Calu3 (cell line): ENCODE measurements at regions of chr2 and their contacts with region 1.

Region 1: DNA sequence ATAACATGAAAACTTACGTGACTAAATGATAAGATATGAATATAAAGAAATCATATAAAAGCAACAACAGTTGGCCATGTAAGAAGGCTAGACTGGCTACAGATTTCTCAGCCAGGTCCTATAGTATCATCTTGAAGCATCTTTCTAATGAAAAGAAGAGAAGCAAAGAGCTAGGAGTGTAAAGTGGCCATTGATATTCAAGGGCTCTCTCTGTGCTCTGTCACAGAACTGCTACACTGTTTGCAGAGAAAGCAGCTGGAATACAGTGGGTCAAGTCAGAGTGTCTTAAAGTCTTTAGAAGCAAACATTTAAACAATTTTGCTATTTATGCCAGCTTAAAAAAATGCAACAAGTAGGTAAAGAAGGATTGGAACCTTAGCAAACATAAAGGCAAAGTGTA is 118.8 kb downstream of the SCN9A start:
- DNase-seq: no peak
- H3K4me3 Mint-ChIP-seq: no peak overlapping the region
- H3K27ac Mint-ChIP-seq: no peak overlapping the region
- H3K4me1 Mint-ChIP-seq: no peaks in the 10 kb centered on the region
- H3K27me3 Mint-ChIP-seq: no peaks in the 10 kb centered on the region
- CTCF ChIP-seq: no peak

Region 2: DNA sequence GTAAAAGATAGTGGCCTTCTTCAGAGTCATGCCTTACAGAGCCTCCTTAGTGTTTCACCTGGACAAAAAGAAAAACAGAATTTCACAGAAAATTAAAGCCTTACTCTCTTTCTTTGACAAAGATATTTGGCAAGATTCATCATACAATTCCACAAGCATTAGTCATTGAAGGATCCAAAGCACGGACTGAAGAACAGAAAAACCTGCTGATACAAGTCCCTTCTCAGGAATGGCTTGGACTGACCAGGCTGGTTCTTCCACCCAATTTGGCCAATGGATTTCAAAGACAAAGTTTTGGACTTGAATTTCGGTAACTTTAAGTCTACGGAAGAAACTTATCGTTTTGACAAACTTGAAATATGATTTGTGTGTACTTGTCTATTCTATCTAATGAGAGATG is 423.7 kb before region 1 on chr2:
- CTCF ChIA-PET with region 1: no interaction called
- intact Hi-C with region 1: no loop called
- DNase-seq: peak; percentile 32
- H3K4me3 Mint-ChIP-seq: no peak overlapping the region
- H3K27ac Mint-ChIP-seq: no peak overlapping the region
- H3K4me1 Mint-ChIP-seq: no peaks in the 10 kb centered on the region
- H3K27me3 Mint-ChIP-seq: no peaks in the 10 kb centered on the region
- CTCF ChIP-seq: no peak

Region 3: DNA sequence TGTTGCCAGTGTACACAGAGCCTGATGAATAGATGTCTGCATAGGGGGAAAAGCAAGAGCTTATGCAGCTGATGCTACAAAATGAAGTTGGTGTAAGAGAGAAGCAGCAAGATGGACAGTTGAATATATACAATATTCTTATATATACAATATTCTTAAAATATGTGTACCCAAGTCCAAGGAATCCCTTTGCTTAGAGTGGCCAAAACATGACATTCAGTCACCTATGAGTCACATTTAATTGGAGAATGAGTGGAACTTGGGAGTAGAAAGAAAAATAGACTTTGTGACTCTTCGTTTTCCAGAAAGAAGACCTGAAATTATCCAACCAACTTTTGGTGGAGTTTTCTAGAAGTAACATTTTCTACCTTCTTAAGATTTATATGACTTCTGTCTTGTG is 37.1 kb after region 1 on chr2:
- CTCF ChIA-PET with region 1: no interaction called
- intact Hi-C with region 1: loop called (anchors 1 kb)
- DNase-seq: no peak
- H3K4me3 Mint-ChIP-seq: no peak overlapping the region
- H3K27ac Mint-ChIP-seq: no peak overlapping the region
- H3K4me1 Mint-ChIP-seq: no peaks in the 10 kb centered on the region
- H3K27me3 Mint-ChIP-seq: no peaks in the 10 kb centered on the region
- CTCF ChIP-seq: no peak

Region 4: GRCh38 chr2:166332106-166332505 is 75.2 kb after region 1 on chr2:
- CTCF ChIA-PET with region 1: no interaction called
- intact Hi-C with region 1: no loop called
- DNase-seq: no peak
- H3K4me3 Mint-ChIP-seq: no peak overlapping the region
- H3K27ac Mint-ChIP-seq: no peak overlapping the region
- H3K4me1 Mint-ChIP-seq: no peaks in the 10 kb centered on the region
- H3K27me3 Mint-ChIP-seq: no peaks in the 10 kb centered on the region
- CTCF ChIP-seq: no peak

Region 5: DNA sequence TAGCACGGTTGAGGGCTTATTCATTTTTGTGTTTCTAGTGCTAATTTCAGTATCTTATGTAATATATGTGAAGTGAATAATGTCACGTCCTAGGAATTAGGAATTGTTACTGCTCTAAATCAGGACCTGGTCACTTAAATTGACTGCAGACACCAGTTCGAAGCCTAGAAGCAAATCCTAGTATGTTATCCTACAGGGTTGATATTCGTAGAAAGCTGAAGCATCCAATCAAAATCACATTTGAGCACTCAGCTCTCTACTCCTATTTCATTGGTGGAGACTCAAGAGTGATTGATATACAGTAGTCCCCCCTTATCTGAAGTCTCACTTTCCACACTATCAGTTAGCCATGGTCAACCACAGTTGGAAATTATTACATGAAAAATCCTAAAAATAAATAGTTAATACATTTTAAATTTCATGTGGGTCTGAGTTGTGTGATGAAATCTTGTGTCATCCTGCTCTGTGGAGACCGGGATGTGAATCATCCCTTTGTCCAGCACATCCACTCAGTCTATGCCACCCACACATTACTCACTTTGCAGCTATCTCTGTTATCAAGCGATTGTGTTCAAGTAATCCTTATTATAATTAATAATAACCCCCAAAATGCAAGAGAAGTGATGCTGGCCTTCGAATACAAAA is 154.1 kb after region 1 on chr2:
- CTCF ChIA-PET with region 1: no interaction called
- intact Hi-C with region 1: no loop called
- DNase-seq: no peak
- H3K4me3 Mint-ChIP-seq: no peak overlapping the region
- H3K27ac Mint-ChIP-seq: peak overlapping the region; percentile 56
- H3K4me1 Mint-ChIP-seq: peaks cover 8% of the 10 kb centered on the region
- H3K27me3 Mint-ChIP-seq: no peaks in the 10 kb centered on the region
- CTCF ChIP-seq: no peak